ENCODE measurements at regions of chr11 and their contacts with region 1.

Region 1: DNA sequence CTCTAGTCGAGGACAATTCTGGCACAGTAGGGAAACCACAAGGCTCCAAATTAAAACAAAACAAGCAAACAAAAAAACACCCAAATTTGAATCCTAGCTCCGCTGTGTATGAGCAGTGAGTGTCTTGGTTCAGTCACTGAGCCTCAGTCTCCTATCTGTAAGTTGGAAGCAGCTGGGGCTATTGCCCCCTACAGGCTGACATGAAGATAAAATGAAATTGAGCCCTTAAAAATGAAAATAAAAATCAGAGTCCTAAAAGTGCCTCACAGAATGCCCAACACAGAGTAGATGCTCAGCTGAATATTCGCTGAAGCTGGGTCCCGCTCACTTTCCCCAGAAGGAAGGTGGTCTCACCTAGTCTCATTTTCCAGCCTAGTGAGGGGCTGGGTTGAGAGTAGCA is 65.2 kb downstream of the PDE2A start:
- DNase-seq: peak in 2 of 3 donors; percentile 57
- H3K4me3 ChIP-seq: no peak overlapping the region
- H3K27ac ChIP-seq: no peak overlapping the region
- H3K4me1 ChIP-seq: peaks cover 0 to 30% (median 20%) of the 10 kb centered on the region in 4 experiments
- H3K27me3 ChIP-seq: peaks cover 0 to 18% (median 5%) of the 10 kb centered on the region in 5 experiments

Region 2: GRCh38 chr11:72562431-72562830 is 46.6 kb before region 1 on chr11:
- CTCF ChIA-PET with region 1: no interaction called
- POLR2A ChIA-PET with region 1: no interaction called
- DNase-seq: no peak
- H3K4me3 ChIP-seq: no peak overlapping the region
- H3K27ac ChIP-seq: no peak overlapping the region
- H3K4me1 ChIP-seq: peaks cover 0 to 4% (median 0%) of the 10 kb centered on the region in 4 experiments
- H3K27me3 ChIP-seq: peaks cover 0 to 2% (median 0%) of the 10 kb centered on the region in 5 experiments

Region 3: GRCh38 chr11:72577271-72577721 is 31.7 kb before region 1 on chr11:
- CTCF ChIA-PET with region 1: no interaction called
- POLR2A ChIA-PET with region 1: no interaction called
- DNase-seq: no peak
- H3K4me3 ChIP-seq: no peak overlapping the region
- H3K27ac ChIP-seq: no peak overlapping the region
- H3K4me1 ChIP-seq: no peaks in the 10 kb centered on the region
- H3K27me3 ChIP-seq: peaks cover 0 to 2% (median 0%) of the 10 kb centered on the region in 5 experiments

Region 4: DNA sequence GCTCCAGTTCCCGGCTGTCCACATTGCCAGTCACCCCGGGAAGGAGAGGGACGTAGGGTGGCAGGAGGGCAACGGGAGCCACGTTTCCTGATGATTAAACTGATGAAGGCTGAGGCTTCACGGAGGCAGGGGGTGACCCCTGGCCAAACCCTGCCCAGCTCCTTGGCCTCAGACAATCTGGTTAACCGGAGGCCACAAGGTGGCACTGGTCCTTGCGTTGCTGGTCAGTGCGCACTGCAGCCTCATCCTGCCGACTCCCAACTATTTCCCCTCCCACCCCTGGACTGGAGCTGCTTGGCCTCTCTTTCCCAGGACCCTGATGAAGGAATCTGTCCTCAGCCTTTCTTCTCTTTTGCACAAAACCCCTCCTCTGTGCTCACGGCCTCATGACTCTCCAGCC is 10.1 kb before region 1 on chr11:
- CTCF ChIA-PET with region 1: interaction called, 13 read pairs
- POLR2A ChIA-PET with region 1: no interaction called
- DNase-seq: no peak
- H3K4me3 ChIP-seq: no peak overlapping the region
- H3K27ac ChIP-seq: no peak overlapping the region
- H3K4me1 ChIP-seq: no peaks in the 10 kb centered on the region
- H3K27me3 ChIP-seq: peaks cover 0 to 7% (median 0%) of the 10 kb centered on the region in 5 experiments